A673 (cell line): ENCODE measurements at regions of chr15 and their contacts with region 1.

Region 1: DNA sequence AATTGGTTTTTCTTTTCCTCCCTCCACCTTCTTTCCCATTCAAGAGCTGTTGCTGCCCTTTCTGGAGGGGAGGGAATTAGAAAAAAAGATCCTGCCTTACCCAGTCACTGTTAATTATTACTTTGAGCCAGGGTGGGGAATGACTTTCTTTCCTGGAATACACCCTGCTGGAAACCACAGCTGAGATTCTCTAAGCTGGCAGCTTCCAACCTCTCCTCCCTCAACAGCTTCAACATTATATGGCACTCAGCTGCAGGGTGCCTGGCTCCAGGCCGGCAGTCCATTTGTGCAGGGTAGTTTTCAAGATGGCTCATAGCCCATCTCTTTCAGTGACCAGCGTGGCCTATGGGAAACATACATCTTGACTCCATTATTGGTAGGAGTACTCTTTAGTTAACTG is 105.8 kb downstream of the UBE3A start:
- DNase-seq: no peak
- H3K4me3 ChIP-seq: no peak overlapping the region
- H3K27ac ChIP-seq: no peak overlapping the region
- H3K4me1 ChIP-seq: no peaks in the 10 kb centered on the region
- H3K27me3 ChIP-seq: no peaks in the 10 kb centered on the region
- CTCF ChIP-seq: no peak

Region 2: DNA sequence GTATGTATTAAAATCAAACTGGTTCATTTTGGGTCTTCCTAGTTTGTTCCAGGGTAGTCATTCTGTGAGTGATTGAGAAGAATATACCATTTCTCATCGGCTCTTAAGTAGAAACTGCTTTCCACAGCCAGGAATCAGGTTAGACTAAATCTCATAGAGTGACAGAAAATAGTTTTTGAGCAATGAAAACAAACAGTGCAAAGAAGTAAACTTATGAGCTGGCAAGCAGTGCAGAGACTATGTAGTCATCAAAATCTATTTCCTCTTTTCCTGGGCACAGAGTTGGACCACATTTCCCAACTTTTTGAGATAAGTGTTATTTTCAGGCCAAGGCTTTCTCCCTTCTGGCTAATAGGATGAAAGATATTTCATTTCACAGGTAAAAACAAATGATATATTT is 39.2 kb after region 1 on chr15:
- CTCF ChIA-PET with region 1: no interaction called
- POLR2A ChIA-PET with region 1: no interaction called
- intact Hi-C with region 1: loop called (anchors 5 kb)
- DNase-seq: no peak
- H3K4me3 ChIP-seq: no peak overlapping the region
- H3K27ac ChIP-seq: no peak overlapping the region
- H3K4me1 ChIP-seq: peaks cover 6% of the 10 kb centered on the region
- H3K27me3 ChIP-seq: no peaks in the 10 kb centered on the region
- CTCF ChIP-seq: no peak

Region 3: GRCh38 chr15:25456196-25456595 is 123.1 kb after region 1 on chr15:
- CTCF ChIA-PET with region 1: interaction called, 14 read pairs
- POLR2A ChIA-PET with region 1: no interaction called
- intact Hi-C with region 1: no loop called
- DNase-seq: no peak
- H3K4me3 ChIP-seq: no peak overlapping the region
- H3K27ac ChIP-seq: no peak overlapping the region
- H3K4me1 ChIP-seq: no peaks in the 10 kb centered on the region
- H3K27me3 ChIP-seq: no peaks in the 10 kb centered on the region
- CTCF ChIP-seq: no peak